Activated CD4-positive, alpha-beta T cell treated with anti-CD3 and anti-CD28 coated beads, Interleukin-2, amount 10 ng/mL, durations not matched to agents 24 days and 14 days (primary cell): ENCODE measurements at regions of chr14 and their contacts with region 1.

Region 1: GRCh38 chr14:61730756-61731373 is 31.4 kb upstream of the SNAPC1 start:
- DNase-seq: no peak
- H3K4me3 Mint-ChIP-seq: no peak overlapping the region
- H3K27ac Mint-ChIP-seq: peak overlapping the region; percentile 9
- H3K4me1 Mint-ChIP-seq: peaks cover 56% of the 10 kb centered on the region
- H3K27me3 Mint-ChIP-seq: no peaks in the 10 kb centered on the region

Region 2: DNA sequence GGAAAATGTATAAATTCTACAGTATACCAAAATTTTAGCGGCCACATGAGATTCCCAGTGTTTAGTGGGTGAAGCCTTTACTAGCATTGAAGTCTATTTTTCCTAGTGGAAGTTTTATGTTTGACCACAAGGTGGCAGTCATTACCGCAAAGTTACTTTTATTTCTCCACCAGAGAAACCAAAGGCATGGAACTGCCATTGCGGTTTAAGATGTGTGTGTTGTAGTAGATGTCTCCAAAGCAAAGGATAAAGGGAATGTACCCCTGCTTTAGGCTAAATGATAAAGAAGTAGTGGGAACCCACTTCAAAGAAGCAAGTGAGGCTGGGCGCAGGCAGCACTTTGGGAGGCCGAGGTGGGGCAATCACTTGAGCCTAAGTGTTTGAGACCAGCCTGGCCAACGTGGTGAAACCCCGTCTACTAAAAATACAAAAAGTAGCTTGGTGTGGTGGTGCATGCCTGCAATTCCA is 269.0 kb before region 1 on chr14:
- intact Hi-C with region 1: loop called (anchors 2 kb)
- DNase-seq: peak; percentile 86
- H3K4me3 Mint-ChIP-seq: peak overlapping the region; percentile 28
- H3K27ac Mint-ChIP-seq: peak overlapping the region; percentile 91
- H3K4me1 Mint-ChIP-seq: peaks cover 50% of the 10 kb centered on the region
- H3K27me3 Mint-ChIP-seq: no peaks in the 10 kb centered on the region

Region 3: DNA sequence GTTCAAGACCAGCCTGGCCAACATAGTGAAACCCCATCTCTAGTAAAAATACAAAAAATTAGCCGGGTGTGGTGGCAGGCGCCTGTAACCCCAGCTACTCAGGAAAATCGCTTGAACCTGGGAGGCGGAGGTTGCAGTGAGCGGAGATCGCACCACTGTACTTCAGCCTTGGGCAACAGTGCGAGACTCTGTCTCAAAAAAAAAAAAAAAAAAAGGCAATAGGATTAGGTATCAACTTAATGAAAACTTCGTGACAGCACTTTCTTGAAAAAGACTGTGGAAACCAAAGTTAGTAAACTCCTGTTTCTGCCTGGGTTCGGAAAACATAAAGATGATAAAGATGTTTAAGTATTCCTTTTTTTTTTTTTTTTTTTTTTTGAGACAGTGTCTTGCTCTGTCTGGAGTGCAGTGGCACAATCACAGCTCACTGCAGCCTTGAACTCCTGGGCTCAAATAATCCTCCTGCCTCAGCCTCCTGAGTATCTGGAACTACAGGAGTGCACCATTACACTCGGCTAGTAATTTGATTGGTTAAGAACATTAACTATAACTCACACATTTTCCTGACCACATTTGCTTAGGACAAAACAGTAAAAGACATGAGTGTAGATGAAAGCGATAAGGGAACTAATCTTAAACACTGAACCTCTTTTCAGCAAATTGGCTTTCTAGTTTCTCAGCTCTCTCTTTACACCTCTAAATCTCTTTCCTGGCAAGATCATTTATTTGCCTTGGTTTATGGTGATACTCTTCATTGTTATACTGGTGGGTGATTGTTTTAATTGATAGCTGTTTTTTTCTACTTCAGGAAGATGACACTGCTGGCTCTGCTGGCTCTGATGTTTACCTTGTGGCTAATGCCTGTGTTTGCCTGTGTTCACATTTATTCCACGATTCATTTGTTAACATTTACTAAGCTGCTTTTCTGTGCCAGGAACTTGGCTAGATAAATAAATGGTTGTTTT is 19.7 kb before region 1 on chr14:
- intact Hi-C with region 1: loop called (anchors 2 kb)
- DNase-seq: no peak
- H3K4me3 Mint-ChIP-seq: peak overlapping the region; percentile 53
- H3K27ac Mint-ChIP-seq: peak overlapping the region; percentile 68
- H3K4me1 Mint-ChIP-seq: peaks cover 62% of the 10 kb centered on the region
- H3K27me3 Mint-ChIP-seq: no peaks in the 10 kb centered on the region

Region 4: GRCh38 chr14:61797309-61797708 is 66.4 kb after region 1 on chr14:
- intact Hi-C with region 1: no loop called
- DNase-seq: peak; percentile 42
- H3K4me3 Mint-ChIP-seq: no peak overlapping the region
- H3K27ac Mint-ChIP-seq: no peak overlapping the region
- H3K4me1 Mint-ChIP-seq: no peaks in the 10 kb centered on the region
- H3K27me3 Mint-ChIP-seq: no peaks in the 10 kb centered on the region